ENCODE measurements at regions of chr1 and their contacts with region 1.

Region 1: DNA sequence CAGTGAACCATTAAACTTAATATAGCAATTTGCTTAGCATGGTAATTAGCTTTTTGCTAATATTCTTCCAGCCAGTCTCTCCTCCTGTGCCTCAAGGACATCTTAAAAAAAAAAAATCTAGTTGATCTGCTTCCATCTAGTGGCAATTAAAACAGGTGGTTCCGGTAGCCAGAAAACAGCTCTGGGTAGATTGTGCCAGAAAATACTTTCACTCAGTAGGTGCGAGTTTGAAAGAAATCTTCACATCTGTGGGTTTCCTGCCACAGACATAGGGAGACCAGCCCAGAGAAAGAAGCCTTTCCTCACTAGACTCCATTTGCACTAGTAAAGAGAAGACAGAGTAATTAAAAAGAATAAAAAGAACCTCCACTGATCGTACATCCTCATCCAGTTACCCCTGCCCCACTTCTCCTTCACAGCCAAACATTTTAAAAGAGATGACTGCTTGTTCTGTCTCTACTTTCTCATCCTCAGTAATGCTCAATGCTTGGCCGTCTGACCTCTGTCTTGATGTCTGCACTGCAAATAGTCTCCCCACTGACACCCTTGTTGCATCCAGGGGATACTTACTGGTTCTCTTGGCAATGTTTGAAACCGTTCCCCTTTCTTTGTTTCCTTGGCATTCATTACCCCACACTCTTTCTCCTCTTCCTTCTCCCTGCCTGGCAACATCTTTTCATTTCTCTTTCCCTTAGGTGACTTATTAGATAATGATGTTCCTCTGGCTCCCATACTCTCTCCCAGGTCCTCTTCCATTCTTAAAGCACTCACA is 16.9 kb downstream of the SELL start:
- DNase-seq: peak; percentile 59
- ATAC-seq: peak; percentile 20
- H3K4me3 ChIP-seq: peak overlapping the region in 1 of 5 experiments; percentile 37
- H3K4me3 Mint-ChIP-seq: peak overlapping the region; percentile 54
- H3K27ac ChIP-seq: peak overlapping the region; percentile 87 to 88
- H3K27ac Mint-ChIP-seq: peak overlapping the region; percentile 90
- H3K4me1 ChIP-seq: peaks cover 98 to 99% of the 10 kb centered on the region in 2 donors
- H3K4me1 Mint-ChIP-seq: peaks cover 95% of the 10 kb centered on the region
- H3K27me3 ChIP-seq: no peaks in the 10 kb centered on the region
- H3K27me3 Mint-ChIP-seq: no peaks in the 10 kb centered on the region
- CTCF ChIP-seq: peak; percentile 25

Region 2: DNA sequence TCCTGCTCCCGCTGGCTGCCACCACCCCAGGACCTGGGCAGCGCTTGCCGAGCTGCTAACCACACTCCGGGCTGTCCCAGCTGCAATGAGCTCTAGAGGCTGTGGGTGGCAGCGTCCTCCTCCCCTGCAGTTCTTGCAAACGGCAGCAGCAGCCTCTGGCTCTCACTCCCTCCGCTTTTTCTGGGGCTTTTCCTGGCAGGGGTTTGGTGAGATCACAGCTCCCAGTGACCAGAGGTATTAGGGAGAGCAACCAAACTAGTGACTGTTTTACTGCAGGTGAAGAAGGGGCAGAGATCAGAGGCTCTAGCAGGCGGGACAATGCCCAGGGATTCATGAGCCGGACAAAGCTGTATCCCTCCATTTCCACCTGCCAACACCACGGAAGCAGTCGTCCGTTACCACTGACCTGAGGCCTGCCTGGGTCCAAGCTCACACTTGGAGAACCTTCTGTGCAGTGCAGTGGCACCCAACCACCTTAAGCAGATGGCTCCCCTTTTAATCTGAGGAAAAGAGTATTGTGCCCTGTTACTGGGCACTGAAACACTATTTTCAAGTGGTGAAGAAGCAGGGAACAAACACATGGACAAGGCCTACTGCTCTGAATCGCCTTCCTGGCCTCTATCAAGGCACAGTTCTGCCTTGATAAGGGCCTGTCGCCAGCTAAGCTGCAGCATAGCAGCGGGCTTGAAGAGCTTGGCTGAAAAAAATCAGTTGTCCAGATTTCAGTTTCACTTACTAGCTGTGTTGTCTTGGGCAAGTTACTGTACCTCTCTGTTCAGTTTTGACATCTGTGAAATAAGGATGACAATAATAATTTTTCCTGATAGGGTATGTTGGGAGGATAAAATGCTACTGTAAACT is 107.9 kb before region 1 on chr1 and contains the start of gene F5:
- CTCF ChIA-PET with region 1: interaction called, 10 read pairs
- POLR2A ChIA-PET with region 1: no interaction called
- intact Hi-C with region 1: no loop called
- DNase-seq: peak; percentile 75
- ATAC-seq: peak; percentile 93
- H3K4me3 ChIP-seq: peak within 1 kb of the TSS in 3 of 5 experiments; percentile 8 to 22 (median 13)
- H3K4me3 Mint-ChIP-seq: peak within 1 kb of the TSS; percentile 69
- H3K27ac ChIP-seq: no peak within 1 kb of the TSS
- H3K27ac Mint-ChIP-seq: no peak within 1 kb of the TSS
- H3K4me1 ChIP-seq: peaks cover 7 to 9% of the 10 kb centered on the region in 2 donors
- H3K4me1 Mint-ChIP-seq: peaks cover 7% of the 10 kb centered on the region
- H3K27me3 ChIP-seq: peaks cover 0 to 13% (median 9%) of the 10 kb centered on the region in 4 experiments
- H3K27me3 Mint-ChIP-seq: peaks cover 26% of the 10 kb centered on the region
- CTCF ChIP-seq: peak; percentile 73
- total RNA-seq, gene F5: 0.15 and 0.27 TPM in 2 replicates

Region 3: GRCh38 chr1:169624912-169625311 is 69.6 kb before region 1 on chr1:
- CTCF ChIA-PET with region 1: interaction called, 10 read pairs
- POLR2A ChIA-PET with region 1: no interaction called
- intact Hi-C with region 1: no loop called
- DNase-seq: no peak
- ATAC-seq: no peak
- H3K4me3 ChIP-seq: no peak overlapping the region
- H3K4me3 Mint-ChIP-seq: no peak overlapping the region
- H3K27ac ChIP-seq: no peak overlapping the region
- H3K27ac Mint-ChIP-seq: no peak overlapping the region
- H3K4me1 ChIP-seq: no peaks in the 10 kb centered on the region
- H3K4me1 Mint-ChIP-seq: peaks cover 7% of the 10 kb centered on the region
- H3K27me3 ChIP-seq: no peaks in the 10 kb centered on the region
- H3K27me3 Mint-ChIP-seq: no peaks in the 10 kb centered on the region
- CTCF ChIP-seq: no peak

Region 4: GRCh38 chr1:169650551-169650950 is 43.9 kb before region 1 on chr1:
- CTCF ChIA-PET with region 1: interaction called, 3 read pairs
- POLR2A ChIA-PET with region 1: no interaction called
- intact Hi-C with region 1: loop called (anchors 5 kb)
- DNase-seq: no peak
- ATAC-seq: no peak
- H3K4me3 ChIP-seq: no peak overlapping the region
- H3K4me3 Mint-ChIP-seq: no peak overlapping the region
- H3K27ac ChIP-seq: no peak overlapping the region
- H3K27ac Mint-ChIP-seq: no peak overlapping the region
- H3K4me1 ChIP-seq: peaks cover 4 to 7% of the 10 kb centered on the region in 2 donors
- H3K4me1 Mint-ChIP-seq: peaks cover 25% of the 10 kb centered on the region
- H3K27me3 ChIP-seq: no peaks in the 10 kb centered on the region
- H3K27me3 Mint-ChIP-seq: no peaks in the 10 kb centered on the region
- CTCF ChIP-seq: no peak

Region 5: GRCh38 chr1:169670836-169671235 is 23.7 kb before region 1 on chr1:
- CTCF ChIA-PET with region 1: interaction called, 101 read pairs
- POLR2A ChIA-PET with region 1: interaction called, 5 read pairs
- intact Hi-C with region 1: loop called (anchors 2 kb)
- DNase-seq: no peak
- ATAC-seq: no peak
- H3K4me3 ChIP-seq: peak overlapping the region in 1 of 5 experiments; percentile 4
- H3K4me3 Mint-ChIP-seq: no peak overlapping the region
- H3K27ac ChIP-seq: peak overlapping the region in 1 of 2 donors; percentile 80
- H3K27ac Mint-ChIP-seq: peak overlapping the region; percentile 81
- H3K4me1 ChIP-seq: peaks cover 48 to 49% of the 10 kb centered on the region in 2 donors
- H3K4me1 Mint-ChIP-seq: peaks cover 63% of the 10 kb centered on the region
- H3K27me3 ChIP-seq: no peaks in the 10 kb centered on the region
- H3K27me3 Mint-ChIP-seq: no peaks in the 10 kb centered on the region
- CTCF ChIP-seq: no peak

Region 6: GRCh38 chr1:169680377-169681019 is 14.0 kb before region 1 on chr1:
- CTCF ChIA-PET with region 1: interaction called, 101 read pairs
- POLR2A ChIA-PET with region 1: interaction called, 35 read pairs
- intact Hi-C with region 1: loop called (anchors 1 kb)
- DNase-seq: peak; percentile 70
- ATAC-seq: peak; percentile 84
- H3K4me3 ChIP-seq: peak overlapping the region in 2 of 5 experiments; percentile 6 to 16
- H3K4me3 Mint-ChIP-seq: peak overlapping the region; percentile 75
- H3K27ac ChIP-seq: peak overlapping the region; percentile 88 to 92
- H3K27ac Mint-ChIP-seq: peak overlapping the region; percentile 95
- H3K4me1 ChIP-seq: peaks cover 84 to 96% of the 10 kb centered on the region in 2 donors
- H3K4me1 Mint-ChIP-seq: peaks cover 61% of the 10 kb centered on the region
- H3K27me3 ChIP-seq: no peaks in the 10 kb centered on the region
- H3K27me3 Mint-ChIP-seq: no peaks in the 10 kb centered on the region
- CTCF ChIP-seq: no peak

Measured in B cell (primary cell).